Ascending aorta (tissue), 2 donors: ENCODE measurements at regions of chr15 and their contacts with region 1.

Region 1: GRCh38 chr15:92831655-92832328 is 68.3 kb upstream of the CHD2 start:
- DNase-seq: peak; percentile 87 to 97
- H3K4me3 ChIP-seq: peak overlapping the region; percentile 44 to 60
- H3K27ac ChIP-seq: peak overlapping the region; percentile 93 to 94
- H3K4me1 ChIP-seq: peaks cover 10 to 56% of the 10 kb centered on the region in 2 donors
- H3K27me3 ChIP-seq: no peaks in the 10 kb centered on the region
- CTCF ChIP-seq: no peak

Region 2: DNA sequence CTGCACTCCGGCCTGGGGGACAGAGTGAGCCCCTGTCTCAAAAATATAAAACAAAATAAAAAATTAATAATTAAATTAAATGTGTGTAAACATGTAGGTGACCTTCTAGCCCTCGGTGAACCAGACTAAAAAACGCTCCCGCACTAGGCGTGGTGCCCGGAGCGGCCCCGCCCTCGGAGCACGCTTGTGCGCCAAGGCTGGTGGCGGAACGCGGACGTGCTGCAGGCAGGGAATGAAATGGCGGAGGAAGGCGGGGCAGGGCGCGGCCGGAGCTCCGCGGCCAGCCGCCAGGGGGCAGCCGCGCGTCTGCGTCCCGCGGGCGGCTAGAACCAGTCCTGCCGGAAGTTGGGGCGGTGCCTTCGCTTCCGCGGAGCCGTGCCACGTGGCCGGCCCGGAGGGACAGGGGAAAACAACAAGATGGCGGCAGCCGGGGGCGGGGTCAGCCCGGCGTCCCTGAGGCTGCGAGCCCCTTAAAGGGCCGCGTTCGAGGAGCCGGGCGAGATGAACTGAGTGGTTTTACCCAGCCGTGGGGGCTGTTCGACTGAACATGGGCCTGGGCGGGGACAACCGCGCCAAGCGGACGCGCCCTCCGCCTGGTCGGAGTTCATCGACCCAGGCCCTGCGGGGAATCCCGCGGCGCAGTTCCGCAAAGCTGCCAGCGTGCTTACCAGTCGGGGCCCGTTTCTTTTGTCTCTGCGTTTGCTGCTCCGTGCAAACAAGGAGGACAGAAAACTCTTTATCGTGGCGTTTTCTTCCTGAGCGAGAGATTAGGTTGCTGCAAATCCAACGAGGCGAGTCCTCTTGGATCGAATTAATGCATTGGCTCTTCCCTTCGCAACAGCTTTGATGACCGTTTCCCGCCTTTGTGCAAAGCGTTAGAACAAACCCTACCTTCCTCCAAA is 22.6 kb before region 1 on chr15:
- intact Hi-C with region 1: loop called (anchors 1 kb)
- DNase-seq: peak; percentile 94 to 99
- H3K4me3 ChIP-seq: peak overlapping the region; percentile 69 to 72
- H3K27ac ChIP-seq: peak overlapping the region; percentile 91 to 98
- H3K4me1 ChIP-seq: peaks cover 3 to 34% of the 10 kb centered on the region in 2 donors
- H3K27me3 ChIP-seq: no peaks in the 10 kb centered on the region
- CTCF ChIP-seq: peak; percentile 85 to 100 (median 89)

Region 3: DNA sequence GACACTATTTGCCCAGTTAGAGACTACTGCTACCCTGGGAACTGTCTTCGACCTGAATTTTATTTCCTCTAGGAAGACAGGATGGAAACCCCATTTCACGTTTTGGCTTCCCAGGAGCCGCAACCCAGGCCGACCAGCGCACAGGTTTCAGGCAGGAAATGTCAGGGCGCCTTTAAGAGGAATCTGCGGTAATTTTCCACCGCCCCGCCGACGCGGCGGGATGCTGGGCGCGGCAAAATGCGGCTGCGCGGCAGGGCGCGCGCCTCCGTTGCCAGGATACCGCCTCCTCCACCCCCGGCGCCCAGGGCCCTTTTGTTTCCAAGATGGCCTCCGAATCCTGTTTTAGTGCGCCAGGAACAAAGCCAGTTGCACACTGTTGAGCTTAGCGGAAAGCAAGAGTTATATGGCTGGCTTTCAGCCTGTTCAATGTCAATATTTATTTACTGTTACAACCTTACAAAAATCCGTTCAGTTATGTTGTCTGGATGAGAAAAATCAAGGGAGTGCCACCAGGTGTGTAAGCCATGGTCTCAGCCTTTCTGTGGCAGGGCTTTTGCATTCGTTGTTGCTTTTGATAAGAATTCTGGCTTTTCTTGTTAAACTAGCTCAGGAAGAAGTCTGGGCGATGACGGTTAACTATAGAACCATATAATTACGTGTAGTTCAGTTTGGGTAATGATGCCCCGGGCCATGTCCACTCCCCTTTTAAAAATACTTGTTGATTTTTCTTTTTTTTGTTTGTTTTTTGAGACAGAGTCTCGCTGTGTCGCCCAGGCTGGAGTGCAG is 11.4 kb before region 1 on chr15:
- intact Hi-C with region 1: loop called (anchors 1 kb)
- DNase-seq: peak; percentile 48 to 94
- H3K4me3 ChIP-seq: peak overlapping the region; percentile 53 to 54
- H3K27ac ChIP-seq: peak overlapping the region; percentile 81 to 89
- H3K4me1 ChIP-seq: peaks cover 0 to 7% of the 10 kb centered on the region in 2 donors
- H3K27me3 ChIP-seq: no peaks in the 10 kb centered on the region
- CTCF ChIP-seq: no peak

Region 4: DNA sequence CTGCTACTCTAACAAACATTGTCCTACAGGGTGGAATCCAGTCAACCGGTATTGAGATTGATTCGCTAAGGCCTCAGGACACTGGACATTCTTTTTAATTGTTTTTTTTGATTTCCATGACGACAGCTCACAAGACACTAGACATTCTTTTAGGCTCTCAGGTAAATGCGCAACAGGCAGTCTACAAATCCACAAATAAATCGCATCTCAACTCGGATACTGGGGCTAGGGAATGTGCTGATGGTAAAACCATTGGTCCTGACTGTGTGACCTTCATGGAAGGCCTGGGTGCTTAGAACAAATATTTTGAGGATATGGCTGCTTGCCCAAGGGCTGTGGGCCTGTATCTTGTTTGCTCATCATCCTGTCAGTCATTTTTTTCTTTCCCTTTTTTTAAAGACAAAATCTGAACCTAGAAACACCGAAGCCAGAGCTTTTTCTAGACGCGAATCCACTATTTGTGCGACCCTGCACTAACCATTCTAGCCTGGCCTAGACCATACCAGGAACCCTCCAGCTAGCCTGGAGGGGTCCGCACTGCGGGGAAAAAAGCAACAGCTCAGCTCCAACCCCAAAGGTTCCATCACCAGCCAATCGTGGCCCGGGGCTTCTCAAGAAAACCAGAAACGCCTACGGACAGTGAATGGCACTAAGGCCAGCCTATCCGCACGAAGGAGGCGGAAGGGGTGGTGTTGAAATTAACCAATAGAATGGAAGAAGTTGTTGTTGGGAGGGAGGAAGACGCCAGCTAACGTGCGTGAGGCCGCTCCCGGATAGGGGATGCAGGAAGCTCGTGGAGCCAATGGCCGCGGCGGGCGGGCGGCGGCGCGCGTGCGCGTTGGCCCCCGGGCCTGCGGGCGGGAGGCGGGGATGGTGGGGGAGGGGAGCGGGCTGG is 50.3 kb after region 1 on chr15:
- intact Hi-C with region 1: loop called (anchors 1 kb)
- DNase-seq: peak; percentile 98 to 100
- H3K4me3 ChIP-seq: peak overlapping the region; percentile 94 to 99
- H3K27ac ChIP-seq: peak overlapping the region; percentile 88 to 100
- H3K4me1 ChIP-seq: peaks cover 0 to 14% of the 10 kb centered on the region in 2 donors
- H3K27me3 ChIP-seq: no peaks in the 10 kb centered on the region
- CTCF ChIP-seq: no peak

Region 5: DNA sequence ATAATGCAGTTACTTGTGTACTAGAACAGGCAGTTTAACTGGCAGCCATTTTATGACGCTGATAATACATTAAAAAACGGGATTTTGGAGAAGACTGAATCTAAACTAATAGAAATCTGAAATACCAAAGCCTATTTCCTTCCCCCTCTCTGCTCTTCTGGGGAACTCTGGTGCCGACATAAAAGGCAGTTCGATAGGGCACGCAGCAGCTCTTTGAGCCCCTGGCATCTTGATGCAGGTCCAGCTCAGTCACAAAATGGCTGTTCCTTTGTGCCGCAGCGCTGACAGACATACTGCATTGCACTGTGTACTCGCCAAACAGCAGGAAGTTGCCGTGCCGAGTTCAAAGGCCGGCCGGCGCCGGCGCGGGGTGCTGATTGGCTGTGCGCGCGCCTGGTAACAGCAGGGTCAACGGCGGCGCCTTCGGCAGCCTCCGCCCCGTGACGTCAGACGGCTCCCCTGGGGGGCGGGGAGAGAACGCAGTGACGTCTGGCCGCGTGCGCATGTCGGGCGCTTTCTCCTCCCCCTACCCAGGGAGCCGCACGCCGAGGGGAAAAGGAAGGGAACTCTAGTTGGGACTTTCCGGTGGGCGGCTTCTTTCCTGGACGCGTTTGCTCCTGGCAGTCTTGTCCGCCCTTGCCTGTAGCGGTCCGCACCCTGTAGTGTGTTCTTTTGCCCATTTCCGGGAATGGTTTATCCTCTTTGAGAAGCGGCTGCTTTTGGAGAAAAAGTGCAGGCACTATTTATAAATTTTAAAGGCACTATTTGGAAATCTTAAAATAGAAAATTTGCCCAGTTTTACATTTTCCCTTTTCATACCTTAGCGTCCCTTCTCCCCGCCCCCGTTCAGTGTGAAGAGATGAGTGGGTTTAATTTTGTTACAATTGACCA is 72.4 kb after region 1 on chr15:
- intact Hi-C with region 1: loop called (anchors 1 kb)
- DNase-seq: peak; percentile 98 to 99
- H3K4me3 ChIP-seq: peak overlapping the region; percentile 71 to 78
- H3K27ac ChIP-seq: peak overlapping the region; percentile 96 to 97
- H3K4me1 ChIP-seq: peaks cover 8 to 39% of the 10 kb centered on the region in 2 donors
- H3K27me3 ChIP-seq: no peaks in the 10 kb centered on the region
- CTCF ChIP-seq: no peak